Sigmoid colon (tissue), 7 donors: ENCODE measurements at regions of chr7 and their contacts with region 1.

Region 1: DNA sequence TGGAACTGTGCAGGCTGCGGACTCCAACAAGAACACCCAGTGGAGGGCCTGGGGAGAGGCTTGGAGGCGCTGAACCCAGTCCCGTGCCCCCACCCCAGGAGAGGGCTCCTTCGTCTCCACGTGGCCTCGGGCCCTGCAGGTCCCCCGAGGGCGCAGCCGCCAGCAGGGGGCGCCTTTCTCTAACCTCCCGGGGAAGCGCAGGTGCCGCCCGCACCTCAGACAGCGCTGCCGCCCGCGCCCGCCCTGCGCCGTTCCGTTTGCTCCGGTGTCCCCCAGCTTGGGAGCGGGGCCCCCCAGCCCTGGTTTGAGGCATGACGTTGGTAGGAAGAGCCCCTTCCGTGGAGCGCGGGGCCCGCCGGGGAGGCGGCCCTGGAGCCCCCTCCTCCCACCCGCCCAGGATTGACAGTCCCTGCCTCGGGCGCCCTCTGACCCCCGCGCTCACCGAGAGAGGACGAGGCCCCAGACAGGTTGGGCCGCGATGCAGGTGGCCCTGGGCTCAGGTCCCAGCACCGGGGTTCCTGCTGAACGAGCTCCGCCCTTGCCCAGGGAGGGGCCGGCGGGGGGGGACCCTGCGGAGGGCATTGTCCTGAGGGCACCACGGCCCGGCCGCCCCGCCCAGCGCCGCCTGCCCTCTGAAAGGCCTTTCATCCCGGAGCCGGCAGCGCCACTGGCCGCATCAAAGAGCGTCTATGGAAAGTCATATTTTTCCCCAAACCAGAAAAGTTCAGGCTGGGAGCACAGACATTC is 42.8 kb downstream of the FOXL3 start:
- DNase-seq: peak; percentile 86
- H3K4me3 ChIP-seq: peak overlapping the region in 3 of 4 donors; percentile 31 to 48 (median 42)
- H3K27ac ChIP-seq: peak overlapping the region; percentile 53 to 74 (median 64)
- H3K4me1 ChIP-seq: peaks cover 0 to 18% (median 17%) of the 10 kb centered on the region in 4 donors
- H3K27me3 ChIP-seq: peaks cover 0 to 8% (median 0%) of the 10 kb centered on the region in 3 donors
- CTCF ChIP-seq: peak; percentile 53 to 90 (median 76)
- EP300 ChIP-seq: no peak
- POLR2A ChIP-seq: no peak

Region 2: GRCh38 chr7:732094-732541 is 399.3 kb after region 1 on chr7:
- intact Hi-C with region 1: loop called (anchors 1 kb)
- DNase-seq: peak; percentile 79
- H3K4me3 ChIP-seq: no peak overlapping the region
- H3K27ac ChIP-seq: peak overlapping the region in 3 of 4 donors; percentile 8 to 31 (median 19)
- H3K4me1 ChIP-seq: peaks cover 0 to 20% (median 14%) of the 10 kb centered on the region in 4 donors
- H3K27me3 ChIP-seq: no peaks in the 10 kb centered on the region
- CTCF ChIP-seq: peak in 3 of 4 experiments; percentile 19 to 43 (median 37)
- EP300 ChIP-seq: no peak
- POLR2A ChIP-seq: no peak